ENCODE measurements at regions of chr6 and their contacts with region 1.

Region 1: GRCh38 chr6:90219209-90219985 is 77.2 kb downstream of the BACH2 start:
- DNase-seq: peak; percentile 50
- ATAC-seq: no peak
- H3K4me3 Mint-ChIP-seq: no peak overlapping the region
- H3K27ac Mint-ChIP-seq: no peak overlapping the region
- H3K4me1 Mint-ChIP-seq: peaks cover 20% of the 10 kb centered on the region
- H3K27me3 Mint-ChIP-seq: no peaks in the 10 kb centered on the region

Region 2: DNA sequence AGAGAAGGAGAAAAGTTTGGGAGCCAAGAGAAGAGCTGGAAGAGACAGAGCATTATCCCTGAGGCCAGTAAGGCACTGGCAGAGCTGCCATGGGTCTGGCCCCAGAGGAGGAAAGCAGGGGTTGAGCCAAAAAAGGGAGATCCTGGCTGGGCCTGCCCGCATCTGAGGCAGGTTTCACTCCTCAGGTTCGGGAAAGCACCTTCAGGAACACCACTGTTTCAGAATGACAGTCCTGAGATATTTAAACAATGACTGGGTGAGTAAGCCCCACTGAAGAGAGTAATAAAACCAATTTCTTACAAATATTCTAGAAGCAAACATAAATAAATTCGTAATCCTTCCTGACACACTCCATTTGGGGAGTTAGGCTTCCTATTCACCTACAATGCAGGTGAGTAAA is 75.0 kb before region 1 on chr6:
- CTCF ChIA-PET with region 1: interaction called, 3 read pairs
- POLR2A ChIA-PET with region 1: no interaction called
- intact Hi-C with region 1: loop called in 1 of 2 experiments (anchors 2 kb)
- DNase-seq: peak; percentile 75
- ATAC-seq: peak; percentile 75
- H3K4me3 Mint-ChIP-seq: peak overlapping the region; percentile 32
- H3K27ac Mint-ChIP-seq: peak overlapping the region; percentile 95
- H3K4me1 Mint-ChIP-seq: peaks cover 81% of the 10 kb centered on the region
- H3K27me3 Mint-ChIP-seq: no peaks in the 10 kb centered on the region

Region 3: DNA sequence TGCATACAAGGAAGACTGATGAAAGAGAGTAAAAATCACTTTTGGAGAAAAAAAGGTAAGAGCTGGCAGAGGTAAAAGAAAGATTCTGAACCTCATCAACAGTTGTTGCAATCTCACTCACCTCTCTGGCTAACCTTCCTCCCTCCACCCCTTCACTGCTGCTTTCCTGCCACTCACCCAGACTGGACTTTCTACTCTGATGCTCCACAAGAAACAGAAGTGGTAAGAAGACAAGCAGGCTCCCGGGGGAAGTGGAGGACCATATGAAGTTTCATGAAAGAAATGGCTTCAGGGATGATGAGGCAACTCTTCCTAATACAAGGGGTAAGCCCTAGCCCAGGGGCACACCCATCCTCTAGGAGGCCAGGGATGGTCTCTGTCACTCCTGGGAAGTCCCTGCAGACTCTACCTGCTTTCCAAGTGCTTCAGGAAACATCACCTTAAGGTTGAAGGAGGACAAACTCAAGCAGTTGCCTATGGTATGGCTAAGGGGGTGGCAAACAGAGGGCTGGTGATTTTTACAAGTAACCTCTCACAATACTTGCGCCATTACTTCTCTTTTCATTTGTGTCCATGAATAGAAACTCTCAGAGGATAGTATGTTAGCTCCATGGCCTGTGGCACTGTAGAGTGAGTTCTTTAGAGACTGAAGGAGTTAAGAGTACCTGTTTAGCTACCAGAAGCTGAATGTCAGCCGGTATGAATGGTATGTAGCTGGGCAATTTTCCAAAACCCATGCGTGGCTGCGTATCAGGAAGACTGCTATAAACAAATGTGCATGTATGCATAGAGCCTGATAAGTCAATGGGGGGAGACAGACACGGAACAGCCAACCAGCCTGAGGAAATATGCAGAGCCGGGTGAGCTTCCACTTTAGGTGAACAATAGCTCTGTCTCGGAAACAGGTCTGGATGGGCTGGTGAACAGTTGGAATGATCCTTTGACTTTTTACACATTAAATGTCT is 34.8 kb before region 1 on chr6:
- CTCF ChIA-PET with region 1: interaction called, 5 read pairs
- POLR2A ChIA-PET with region 1: interaction called, 3 read pairs
- intact Hi-C with region 1: loop called in 1 of 2 experiments (anchors 2 kb)
- DNase-seq: peak; percentile 18
- ATAC-seq: no peak
- H3K4me3 Mint-ChIP-seq: peak overlapping the region; percentile 11
- H3K27ac Mint-ChIP-seq: peak overlapping the region; percentile 74
- H3K4me1 Mint-ChIP-seq: peaks cover 71% of the 10 kb centered on the region
- H3K27me3 Mint-ChIP-seq: no peaks in the 10 kb centered on the region

Region 4: DNA sequence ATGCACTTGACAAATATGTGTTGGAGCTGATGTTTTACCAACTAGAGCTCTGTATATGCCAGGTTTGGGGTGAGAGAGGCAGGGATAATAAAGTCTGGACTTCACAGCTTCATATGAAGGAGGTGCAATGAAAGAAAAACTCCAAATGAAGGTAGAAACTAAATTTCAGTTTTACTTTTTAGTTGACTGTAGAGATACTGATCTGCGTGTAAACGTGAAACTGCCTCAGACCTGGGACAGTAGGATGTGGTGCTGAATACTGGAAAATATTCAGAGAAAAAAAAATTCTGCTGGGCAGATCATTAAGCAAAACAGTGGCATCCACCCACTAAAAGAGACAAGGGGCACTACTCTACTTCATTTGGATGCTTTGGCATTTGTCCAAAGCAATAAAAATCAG is 17.2 kb before region 1 on chr6:
- CTCF ChIA-PET with region 1: interaction called, 8 read pairs
- POLR2A ChIA-PET with region 1: interaction called, 11 read pairs
- intact Hi-C with region 1: loop called (anchors 1 to 2 kb)
- DNase-seq: peak; percentile 53
- ATAC-seq: peak; percentile 75
- H3K4me3 Mint-ChIP-seq: peak overlapping the region; percentile 11
- H3K27ac Mint-ChIP-seq: peak overlapping the region; percentile 87
- H3K4me1 Mint-ChIP-seq: peaks cover 86% of the 10 kb centered on the region
- H3K27me3 Mint-ChIP-seq: no peaks in the 10 kb centered on the region

Region 5: DNA sequence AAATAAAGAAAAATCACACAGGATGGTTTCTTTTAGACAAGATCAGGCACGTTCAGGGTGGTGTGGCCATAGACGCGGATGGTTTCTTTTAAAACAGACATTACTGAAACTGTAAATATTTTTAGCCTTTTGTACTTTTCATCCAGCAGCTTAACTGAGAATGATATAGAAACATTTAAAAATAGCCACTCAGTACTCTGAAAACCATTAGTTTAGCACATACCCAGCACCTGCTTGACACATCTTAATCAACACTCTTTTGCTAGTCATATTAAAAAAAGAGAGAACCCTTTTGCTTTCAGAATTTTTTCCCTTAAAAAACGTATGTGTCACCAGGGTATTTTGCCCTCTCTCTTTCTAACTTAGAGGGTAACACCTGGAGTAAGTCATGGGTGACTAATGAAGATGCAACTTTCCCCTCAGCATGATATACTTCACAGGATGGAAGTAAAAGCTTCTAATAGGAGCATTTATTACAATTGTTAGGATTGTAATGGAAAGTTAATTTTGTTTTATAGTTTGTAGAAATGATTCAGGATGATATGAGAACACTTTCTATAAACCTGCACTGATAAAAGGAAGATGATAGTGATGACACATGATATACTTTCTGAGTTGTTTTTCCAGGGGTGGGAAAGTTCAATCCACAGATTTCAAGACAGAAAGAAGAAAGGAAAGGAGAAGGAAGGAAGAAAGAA is 32.0 kb after region 1 on chr6:
- CTCF ChIA-PET with region 1: interaction called, 8 read pairs
- POLR2A ChIA-PET with region 1: interaction called, 4 read pairs
- intact Hi-C with region 1: loop called (anchors 1 kb)
- DNase-seq: no peak
- ATAC-seq: peak; percentile 72
- H3K4me3 Mint-ChIP-seq: peak overlapping the region; percentile 26
- H3K27ac Mint-ChIP-seq: peak overlapping the region; percentile 97
- H3K4me1 Mint-ChIP-seq: peaks cover 89% of the 10 kb centered on the region
- H3K27me3 Mint-ChIP-seq: no peaks in the 10 kb centered on the region

Region 6: GRCh38 chr6:90314514-90314913 is 95.1 kb after region 1 on chr6:
- CTCF ChIA-PET with region 1: no interaction called
- POLR2A ChIA-PET with region 1: no interaction called
- intact Hi-C with region 1: no loop called
- DNase-seq: no peak
- ATAC-seq: no peak
- H3K4me3 Mint-ChIP-seq: no peak overlapping the region
- H3K27ac Mint-ChIP-seq: no peak overlapping the region
- H3K4me1 Mint-ChIP-seq: peaks cover 9% of the 10 kb centered on the region
- H3K27me3 Mint-ChIP-seq: peaks cover 11% of the 10 kb centered on the region

Measured in activated CD4-positive, alpha-beta T cell treated with anti-CD3 and anti-CD28 coated beads for 36 hours (primary cell).